ENCODE measurements at regions of chr7 and their contacts with region 1.

Region 1: DNA sequence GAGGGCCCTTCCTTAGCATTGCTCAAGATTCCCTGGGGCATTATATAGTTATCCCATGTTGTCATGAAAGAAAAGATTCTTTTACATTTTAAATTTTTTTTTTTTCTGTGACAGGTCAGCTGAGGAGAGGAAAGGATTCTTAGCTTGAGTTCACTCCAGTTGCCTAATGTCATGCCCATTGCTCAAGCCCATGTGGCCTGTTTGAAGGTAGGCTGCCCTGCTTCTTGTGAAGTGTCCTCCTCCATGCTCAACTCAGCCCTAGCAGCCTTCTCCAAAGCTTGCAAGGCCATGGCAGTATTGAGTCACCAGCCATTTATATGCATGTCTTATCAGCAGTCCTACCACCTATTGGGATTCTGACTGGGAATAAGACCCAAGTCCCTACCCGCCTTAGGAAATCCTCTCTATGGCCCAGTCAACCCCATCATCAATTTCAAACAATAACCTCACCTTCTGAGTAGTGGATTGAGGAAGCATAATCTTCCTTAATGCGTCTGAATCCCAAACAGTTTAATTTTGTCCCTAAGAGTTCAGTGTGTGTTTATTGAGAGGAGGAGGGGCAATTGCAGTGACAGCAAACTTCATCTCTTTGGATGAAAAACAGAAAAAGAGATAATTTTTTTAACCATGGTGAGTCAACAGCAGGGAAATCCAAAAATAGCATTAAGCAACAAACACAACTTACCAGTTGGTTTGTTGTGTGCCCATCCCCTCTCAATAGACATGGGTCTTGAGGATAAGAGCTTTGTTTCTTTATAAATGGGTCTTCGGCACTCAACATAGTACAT is 38.6 kb upstream of the WASL start:
- DNase-seq: no peak
- H3K4me3 ChIP-seq: no peak overlapping the region
- H3K27ac ChIP-seq: no peak overlapping the region
- H3K4me1 ChIP-seq: peaks cover 0 to 7% (median 0%) of the 10 kb centered on the region in 4 experiments; a peak in 1 of 7 replicates
- H3K27me3 ChIP-seq: no peaks in the 10 kb centered on the region
- CTCF ChIP-seq: no peak
- EP300 ChIP-seq: no peak
- POLR2A ChIP-seq: no peak
- RAD21 ChIP-seq: no peak

Region 2: GRCh38 chr7:123692471-123692877 is 94.9 kb before region 1 on chr7:
- CTCF ChIA-PET with region 1: no interaction called
- POLR2A ChIA-PET with region 1: no interaction called
- DNase-seq: peak in 1 of 2 experiments; percentile 55
- H3K4me3 ChIP-seq: no peak overlapping the region
- H3K27ac ChIP-seq: no peak overlapping the region
- H3K4me1 ChIP-seq: peaks cover 0 to 3% (median 1%) of the 10 kb centered on the region in 4 experiments; a peak in 3 of 7 replicates
- H3K27me3 ChIP-seq: no peaks in the 10 kb centered on the region
- CTCF ChIP-seq: no peak
- EP300 ChIP-seq: 0 out of 3 replicates have a peak, but pooled peaks of 1 of the 2 experiments have one; percentile 7
- POLR2A ChIP-seq: no peak
- RAD21 ChIP-seq: no peak

Region 3: DNA sequence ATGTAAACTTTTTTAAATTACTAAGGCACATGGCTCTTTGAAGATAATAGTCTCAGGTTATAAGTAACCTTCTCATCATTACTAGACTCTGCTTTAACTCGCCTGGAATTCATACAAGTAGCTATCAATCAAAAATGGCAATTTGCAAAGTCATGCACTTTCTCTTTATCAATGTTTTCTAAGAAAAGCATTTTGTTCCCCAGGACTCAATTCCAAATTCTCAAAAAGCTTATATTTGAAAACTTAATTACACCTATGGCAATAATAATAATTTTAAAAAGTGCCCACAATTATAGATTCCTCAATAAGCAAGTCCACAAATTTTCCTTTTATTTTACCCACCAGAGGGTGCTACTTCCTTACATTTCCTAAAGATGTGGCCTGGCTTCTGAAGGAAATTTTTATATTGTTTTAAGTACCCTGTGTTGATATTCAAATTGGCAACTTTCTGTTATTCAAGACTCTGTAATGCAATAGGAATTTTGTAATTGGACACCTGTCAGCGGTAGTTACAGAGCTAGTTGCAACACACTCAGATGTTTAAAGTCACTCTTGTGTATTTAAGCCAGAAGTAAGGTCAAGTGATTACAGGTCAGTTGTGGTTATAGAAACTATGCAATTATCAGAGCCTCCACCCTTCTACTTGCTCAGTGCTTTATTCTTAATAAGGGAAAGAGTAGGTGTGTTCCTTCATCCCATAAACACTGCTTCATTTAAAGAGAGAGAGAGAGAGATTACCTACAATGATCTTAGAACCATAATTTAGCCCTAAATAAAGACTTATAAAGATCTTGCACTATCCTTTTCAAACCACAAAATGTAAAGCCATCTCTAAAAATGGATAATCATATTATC is 10.5 kb after region 1 on chr7:
- CTCF ChIA-PET with region 1: interaction called, 15 read pairs
- POLR2A ChIA-PET with region 1: no interaction called
- DNase-seq: peak in 1 of 2 experiments; percentile 31
- H3K4me3 ChIP-seq: no peak overlapping the region
- H3K27ac ChIP-seq: no peak overlapping the region
- H3K4me1 ChIP-seq: peaks cover 0 to 3% (median 1%) of the 10 kb centered on the region in 4 experiments; a peak in 2 of 7 replicates
- H3K27me3 ChIP-seq: no peaks in the 10 kb centered on the region
- CTCF ChIP-seq: peak in 2 of 3 experiments; percentile 28 to 46; a peak in 2 of 4 replicates
- EP300 ChIP-seq: no peak
- POLR2A ChIP-seq: no peak
- RAD21 ChIP-seq: peak; percentile 72 to 79

Region 4: GRCh38 chr7:123819001-123819400 is 31.6 kb after region 1 on chr7:
- CTCF ChIA-PET with region 1: no interaction called
- POLR2A ChIA-PET with region 1: no interaction called
- DNase-seq: no peak
- H3K4me3 ChIP-seq: no peak overlapping the region
- H3K27ac ChIP-seq: no peak overlapping the region
- H3K4me1 ChIP-seq: no peaks in the 10 kb centered on the region
- H3K27me3 ChIP-seq: no peaks in the 10 kb centered on the region
- CTCF ChIP-seq: no peak
- EP300 ChIP-seq: no peak
- POLR2A ChIP-seq: no peak
- RAD21 ChIP-seq: no peak

Measured in H1 (cell line).